Motor neuron (in vitro differentiated cells): ENCODE measurements at regions of chr22 and their contacts with region 1.

Region 1: DNA sequence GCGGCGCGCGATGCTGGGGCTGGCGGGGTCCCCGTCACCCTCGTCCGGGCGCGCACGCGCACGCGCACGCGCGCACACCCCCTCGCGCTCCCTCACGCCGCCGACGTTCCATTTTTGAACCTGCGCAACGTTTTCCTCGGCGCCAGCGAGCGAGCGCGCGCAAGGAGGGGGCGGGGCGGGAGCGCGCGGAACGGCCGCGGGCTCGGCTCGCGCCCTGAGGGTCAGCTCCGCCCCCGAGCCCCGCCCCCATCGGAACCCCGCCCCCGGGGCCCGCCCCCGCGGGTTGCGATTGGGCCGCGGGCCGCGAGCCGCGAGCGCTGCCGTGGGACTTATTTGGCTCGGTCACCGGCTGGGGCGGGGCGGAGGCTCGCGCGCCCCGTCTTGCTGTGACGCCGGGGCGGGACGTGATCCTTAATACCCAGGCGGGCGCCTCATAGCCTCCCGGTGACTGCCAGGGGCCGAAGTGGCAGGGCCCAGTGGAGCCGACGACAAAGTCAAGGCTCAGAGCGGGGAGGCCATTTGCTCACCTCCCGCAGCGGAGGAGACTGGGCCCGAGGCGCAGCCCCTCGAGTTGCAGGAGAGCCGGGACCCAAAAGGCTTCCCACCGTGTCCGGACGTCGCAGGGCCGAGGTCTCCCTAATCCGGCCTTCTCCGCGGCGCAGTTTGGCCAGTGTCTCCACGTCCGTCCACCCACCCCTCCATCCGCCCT is at the start of gene CBX7:
- ATAC-seq: peak; percentile 86 to 92 (median 87)
- H3K4me3 ChIP-seq: peak within 1 kb of the TSS; percentile 43 to 62 (median 46)
- H3K27ac ChIP-seq: peak within 1 kb of the TSS; percentile 3 to 74
- H3K4me1 ChIP-seq: peaks cover 0 to 6% of the 10 kb centered on the region in 2 donors
- total RNA-seq, gene CBX7: 2.6 to 8.9 (median 4.8) TPM

Region 2: GRCh38 chr22:39013942-39014722 is 138.5 kb before region 1 on chr22 and contains the start of gene APOBEC3C:
- in situ Hi-C with region 1: no loop called
- ATAC-seq: peak; percentile 93 to 96 (median 94)
- H3K4me3 ChIP-seq: peak within 1 kb of the TSS in 1 of 5 donors; percentile 2
- H3K27ac ChIP-seq: peak within 1 kb of the TSS in 1 of 2 donors; percentile 64
- H3K4me1 ChIP-seq: peaks cover 24 to 26% of the 10 kb centered on the region in 2 donors
- total RNA-seq, gene APOBEC3C: 0.96 to 59.2 (median 4.5) TPM

Region 3: GRCh38 chr22:39283322-39284004 is 130.8 kb after region 1 on chr22:
- in situ Hi-C with region 1: no loop called
- ATAC-seq: peak in 6 of 8 experiments; percentile 11 to 65 (median 48)
- H3K4me3 ChIP-seq: no peak overlapping the region
- H3K27ac ChIP-seq: no peak overlapping the region
- H3K4me1 ChIP-seq: peaks cover 0 to 25% of the 10 kb centered on the region in 2 donors

Region 4: DNA sequence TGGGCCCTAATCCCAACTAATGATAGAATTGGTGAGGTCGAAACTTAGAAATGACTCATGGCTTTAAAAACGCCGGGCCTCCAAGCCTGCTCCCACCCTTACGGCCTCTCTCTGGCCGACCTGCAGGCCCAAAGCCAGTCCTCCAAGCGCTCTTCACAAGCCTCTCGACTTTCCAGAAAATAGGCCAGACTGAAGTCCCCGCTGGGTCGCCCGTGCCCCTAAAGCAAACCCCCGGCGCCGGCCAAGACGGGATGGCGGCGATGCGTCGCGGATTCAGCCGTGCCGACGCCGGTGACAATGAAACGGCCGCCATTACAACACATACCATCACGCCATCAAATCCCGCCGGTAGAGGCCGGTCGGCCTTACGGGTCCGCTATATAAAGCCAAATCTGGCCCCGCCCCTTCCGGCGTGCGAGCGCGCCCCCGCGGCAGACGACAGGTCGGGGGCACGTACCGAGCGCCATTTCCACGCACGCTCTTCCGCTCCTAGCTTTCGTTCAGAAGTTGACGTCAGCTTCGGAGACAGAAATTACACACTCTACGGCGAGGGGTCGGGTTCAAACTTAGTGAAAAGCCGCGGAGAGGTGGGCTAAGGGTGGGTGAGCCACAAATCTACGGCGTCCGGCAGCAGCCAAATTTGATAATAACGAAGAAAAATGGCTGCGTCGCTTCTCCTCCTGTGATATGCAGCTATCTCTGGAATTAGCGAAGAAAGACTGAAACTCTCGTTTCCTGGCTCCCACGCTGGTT is 166.8 kb after region 1 on chr22 and contains the start of gene RPL3:
- in situ Hi-C with region 1: loop called in 2 of 9 experiments (anchors 25 kb)
- ATAC-seq: peak; percentile 58 to 89 (median 80)
- H3K4me3 ChIP-seq: peak within 1 kb of the TSS; percentile 45 to 93 (median 78)
- H3K27ac ChIP-seq: peak within 1 kb of the TSS; percentile 96 to 98
- H3K4me1 ChIP-seq: peaks cover 25 to 32% of the 10 kb centered on the region in 2 donors
- total RNA-seq, gene RPL3: 1,236 to 3,241 (median 1,964) TPM

Region 5: GRCh38 chr22:39490135-39490798 is 337.6 kb after region 1 on chr22:
- in situ Hi-C with region 1: loop called in 1 of 9 experiments (anchors 25 kb)
- ATAC-seq: peak; percentile 53 to 92 (median 82)
- H3K4me3 ChIP-seq: no peak overlapping the region
- H3K27ac ChIP-seq: no peak overlapping the region
- H3K4me1 ChIP-seq: peaks cover 0 to 5% of the 10 kb centered on the region in 2 donors

Region 6: DNA sequence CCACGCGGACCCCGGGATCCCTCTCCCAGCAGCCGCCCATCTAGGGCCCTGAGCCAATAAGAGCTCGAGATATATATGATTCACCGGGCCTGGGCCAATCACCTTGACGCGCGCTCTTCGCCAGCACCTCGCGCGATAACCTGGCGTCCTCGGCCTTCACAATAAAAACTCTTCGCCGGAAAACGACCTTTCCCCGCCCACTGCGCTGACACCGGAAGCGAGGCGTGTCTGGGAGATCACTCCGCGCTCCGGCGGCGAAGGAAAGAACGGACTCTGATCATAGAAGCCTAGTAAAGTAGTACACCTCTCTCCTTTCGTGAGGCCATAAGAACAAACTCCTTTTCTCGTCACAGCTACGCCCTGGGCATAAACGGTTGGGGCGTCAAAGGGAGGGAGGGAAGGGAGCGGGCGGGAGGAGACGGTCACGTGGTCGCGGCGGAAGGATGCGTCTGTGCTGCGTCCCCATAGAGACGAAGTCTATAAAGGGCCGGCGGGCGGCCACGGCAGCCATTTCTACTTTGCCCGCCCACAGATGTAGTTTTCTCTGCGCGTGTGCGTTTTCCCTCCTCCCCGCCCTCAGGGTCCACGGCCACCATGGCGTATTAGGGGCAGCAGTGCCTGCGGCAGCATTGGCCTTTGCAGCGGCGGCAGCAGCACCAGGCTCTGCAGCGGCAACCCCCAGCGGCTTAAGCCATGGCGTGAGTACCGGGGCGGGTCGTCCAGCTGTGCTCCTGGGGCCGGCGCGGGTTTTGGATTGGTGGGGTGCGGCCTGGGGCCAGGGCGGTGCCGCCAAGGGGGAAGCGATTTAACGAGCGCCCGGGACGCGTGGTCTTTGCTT is 367.6 kb after region 1 on chr22 and contains the start of gene ATF4:
- in situ Hi-C with region 1: loop called in 6 of 9 experiments (anchors 25 kb)
- ATAC-seq: peak; percentile 61 to 89 (median 84)
- H3K4me3 ChIP-seq: peak within 1 kb of the TSS; percentile 93 to 100 (median 95)
- H3K27ac ChIP-seq: peak within 1 kb of the TSS; percentile 99 to 100
- H3K4me1 ChIP-seq: peaks cover 24 to 26% of the 10 kb centered on the region in 2 donors
- total RNA-seq, gene ATF4: 351 to 694 (median 479) TPM

Region 7: GRCh38 chr22:40044102-40044869 is 891.6 kb after region 1 on chr22:
- in situ Hi-C with region 1: loop called in 3 of 9 experiments (anchors 25 kb)
- ATAC-seq: peak; percentile 81 to 91 (median 88)
- H3K4me3 ChIP-seq: peak overlapping the region; percentile 64 to 85 (median 78)
- H3K27ac ChIP-seq: peak overlapping the region; percentile 92 to 97
- H3K4me1 ChIP-seq: peaks cover 7 to 9% of the 10 kb centered on the region in 2 donors